Panc1 (cell line): ENCODE measurements at regions of chr6 and their contacts with region 1.

Region 1: GRCh38 chr6:164832429-164832840 is 477.0 kb downstream of the C6orf118 start:
- DNase-seq: no peak
- ATAC-seq: no peak
- H3K4me3 ChIP-seq: no peak overlapping the region
- H3K27ac ChIP-seq: no peak overlapping the region
- H3K4me1 ChIP-seq: no peaks in the 10 kb centered on the region
- H3K27me3 ChIP-seq: no peaks in the 10 kb centered on the region
- CTCF ChIP-seq: no peak

Region 2: DNA sequence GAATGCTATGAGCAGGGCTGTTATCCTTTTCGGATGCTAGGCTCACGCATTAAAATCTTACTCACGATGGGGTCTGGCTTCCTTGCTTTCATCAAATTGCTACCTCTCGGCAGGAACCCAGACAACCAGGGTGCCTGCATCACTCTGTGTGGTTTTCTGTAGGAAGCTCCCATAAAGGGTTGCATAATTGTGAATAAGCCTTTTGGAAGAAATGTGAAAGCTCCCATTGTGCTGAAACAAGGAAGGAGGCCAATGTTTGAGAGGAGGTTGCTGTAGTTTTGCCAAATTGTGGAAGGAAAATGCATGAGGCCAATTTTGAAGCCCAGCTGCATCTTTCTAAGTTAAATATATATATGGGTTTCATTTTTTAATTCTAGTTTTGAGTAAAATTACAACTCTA is 138.5 kb before region 1 on chr6:
- CTCF ChIA-PET with region 1: interaction called, 13 read pairs
- POLR2A ChIA-PET with region 1: no interaction called
- in situ Hi-C with region 1: no loop called
- intact Hi-C with region 1: no loop called
- DNase-seq: no peak
- ATAC-seq: no peak
- H3K4me3 ChIP-seq: no peak overlapping the region
- H3K27ac ChIP-seq: no peak overlapping the region
- H3K4me1 ChIP-seq: no peaks in the 10 kb centered on the region
- H3K27me3 ChIP-seq: no peaks in the 10 kb centered on the region
- CTCF ChIP-seq: no peak